ENCODE measurements at regions of chr6 and their contacts with region 1.

Region 1: DNA sequence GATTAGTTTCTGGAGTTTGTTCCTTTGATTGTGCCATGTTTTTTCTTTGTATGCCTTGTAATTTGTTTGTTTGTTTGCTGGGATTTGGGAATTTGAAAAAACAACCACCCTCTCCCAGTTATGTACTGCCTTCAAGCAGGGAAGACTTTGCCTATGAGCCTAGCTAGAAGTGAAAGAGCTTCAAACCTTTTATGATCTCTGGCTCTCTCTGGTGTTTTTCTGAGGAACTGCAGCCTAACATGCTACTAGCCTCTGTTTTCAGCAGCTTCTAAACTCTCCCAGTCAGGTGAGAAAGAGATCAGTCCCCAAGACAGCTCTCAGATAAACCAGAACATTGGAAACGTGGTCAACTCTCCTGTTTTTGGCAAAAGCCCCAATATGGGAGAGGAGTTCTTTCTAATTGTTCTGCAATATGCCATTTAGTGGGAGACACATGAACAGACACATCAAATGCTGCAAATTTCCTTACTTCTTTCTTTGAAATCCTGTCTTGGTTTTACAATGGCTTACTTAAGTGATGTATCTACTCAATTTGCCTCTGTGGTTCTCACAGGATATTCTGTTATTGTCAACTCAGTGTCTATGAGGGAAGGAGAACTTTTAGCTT is 58.9 kb upstream of the SERINC1 start:
- DNase-seq: peak; percentile 88
- H3K4me3 Mint-ChIP-seq: no peak overlapping the region
- H3K27ac Mint-ChIP-seq: no peak overlapping the region
- H3K4me1 Mint-ChIP-seq: no peaks in the 10 kb centered on the region
- H3K27me3 Mint-ChIP-seq: peaks cover 25% of the 10 kb centered on the region

Region 2: GRCh38 chr6:122381497-122382265 is 148.9 kb before region 1 on chr6:
- intact Hi-C with region 1: loop called (anchors 1 kb)
- DNase-seq: peak; percentile 87
- H3K4me3 Mint-ChIP-seq: no peak overlapping the region
- H3K27ac Mint-ChIP-seq: no peak overlapping the region
- H3K4me1 Mint-ChIP-seq: peaks cover 2% of the 10 kb centered on the region
- H3K27me3 Mint-ChIP-seq: peaks cover 28% of the 10 kb centered on the region

Region 3: DNA sequence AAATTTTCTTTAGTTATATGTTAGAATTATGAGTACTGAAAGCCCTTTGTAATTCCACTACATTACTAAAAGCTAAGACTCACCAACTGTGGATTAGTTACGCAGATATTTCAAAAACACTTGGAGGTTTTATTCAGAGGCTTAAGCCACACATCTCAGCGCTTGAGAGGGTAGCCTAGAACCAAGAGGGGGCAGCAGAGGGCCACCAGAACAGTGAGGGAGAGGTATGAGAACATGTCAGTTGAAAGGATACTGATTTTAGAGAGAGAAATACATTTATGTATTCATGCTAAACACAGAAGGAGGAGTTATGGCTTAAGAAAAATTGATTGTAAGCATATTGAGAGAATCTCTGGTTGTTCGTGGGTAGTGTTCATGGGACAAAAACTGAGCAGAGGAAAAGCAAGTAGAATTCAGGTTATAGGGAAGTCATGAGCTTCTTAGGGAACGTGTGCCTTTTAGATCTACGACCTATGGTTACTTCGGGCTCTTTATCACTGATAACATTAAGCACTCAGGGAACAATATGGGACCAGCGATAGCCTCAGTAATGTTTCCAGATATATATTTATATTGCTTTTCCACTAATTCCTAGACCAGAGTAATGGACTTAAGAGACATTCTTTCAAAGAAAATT is 38.5 kb before region 1 on chr6:
- intact Hi-C with region 1: loop called (anchors 1 kb)
- DNase-seq: peak; percentile 91
- H3K4me3 Mint-ChIP-seq: no peak overlapping the region
- H3K27ac Mint-ChIP-seq: no peak overlapping the region
- H3K4me1 Mint-ChIP-seq: peaks cover 9% of the 10 kb centered on the region
- H3K27me3 Mint-ChIP-seq: no peaks in the 10 kb centered on the region

Region 4: GRCh38 chr6:122563364-122564071 is 33.0 kb after region 1 on chr6:
- intact Hi-C with region 1: no loop called
- DNase-seq: no peak
- H3K4me3 Mint-ChIP-seq: no peak overlapping the region
- H3K27ac Mint-ChIP-seq: no peak overlapping the region
- H3K4me1 Mint-ChIP-seq: no peaks in the 10 kb centered on the region
- H3K27me3 Mint-ChIP-seq: no peaks in the 10 kb centered on the region